ENCODE measurements at regions of chr3 and their contacts with region 1.

Region 1: GRCh38 chr3:128170805-128171516 is 17.7 kb downstream of the EEFSEC start:
- DNase-seq: no peak
- H3K4me3 ChIP-seq: no peak overlapping the region
- H3K27ac ChIP-seq: no peak overlapping the region
- H3K4me1 ChIP-seq: peaks cover 20% of the 10 kb centered on the region
- H3K27me3 ChIP-seq: no peaks in the 10 kb centered on the region
- CTCF ChIP-seq: peak in 2 of 3 experiments; percentile 52 to 91
- POLR2A ChIP-seq: no peak

Region 2: DNA sequence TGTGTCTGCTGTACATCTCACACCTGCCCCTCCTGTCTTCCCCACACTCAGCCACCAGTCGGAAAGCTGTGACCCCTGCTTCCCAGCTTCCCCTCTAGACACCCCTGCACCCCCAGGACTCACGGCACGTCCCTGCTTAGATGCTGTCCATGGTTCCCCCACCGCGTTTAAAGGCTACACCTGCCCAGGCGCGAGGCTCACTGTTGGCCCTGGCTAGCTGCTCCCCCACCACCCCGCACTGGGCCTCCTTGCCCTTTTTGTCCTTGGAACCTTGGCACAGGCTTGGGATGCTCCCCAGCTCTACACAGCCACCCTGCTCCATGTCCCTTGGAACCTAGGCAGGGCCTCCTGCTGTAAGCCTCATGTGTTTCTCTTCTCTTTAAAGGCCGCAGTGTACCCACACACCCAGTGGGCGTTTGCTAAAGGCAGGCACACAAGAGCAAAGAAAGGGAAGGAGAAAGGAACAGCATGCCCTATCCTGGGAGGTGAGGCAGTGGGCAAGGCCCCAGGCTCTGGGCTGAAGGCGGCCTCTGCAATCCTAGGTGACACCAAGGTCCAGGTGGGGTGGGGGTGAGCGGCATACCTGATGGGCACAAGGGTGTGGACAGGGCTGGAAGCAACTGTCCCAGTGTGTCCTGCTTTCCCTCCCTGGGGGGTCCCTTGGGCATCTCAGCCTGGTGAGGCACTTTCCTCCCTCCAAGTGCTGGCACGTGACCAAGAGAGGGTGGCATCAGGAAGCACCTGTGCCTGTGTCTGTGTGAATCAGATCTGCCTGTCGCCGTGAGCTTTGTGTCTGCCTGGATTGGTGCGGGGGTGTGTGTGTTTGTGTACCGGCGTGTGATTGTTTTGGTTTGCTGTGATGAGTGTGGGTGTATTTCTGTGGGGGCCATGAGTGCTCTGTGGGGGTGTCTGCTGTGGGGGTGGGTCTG is 634.8 kb before region 1 on chr3:
- intact Hi-C with region 1: no loop called
- DNase-seq: no peak
- H3K4me3 ChIP-seq: no peak overlapping the region
- H3K27ac ChIP-seq: no peak overlapping the region
- H3K4me1 ChIP-seq: no peaks in the 10 kb centered on the region
- H3K27me3 ChIP-seq: no peaks in the 10 kb centered on the region
- CTCF ChIP-seq: no peak
- POLR2A ChIP-seq: no peak

Region 3: DNA sequence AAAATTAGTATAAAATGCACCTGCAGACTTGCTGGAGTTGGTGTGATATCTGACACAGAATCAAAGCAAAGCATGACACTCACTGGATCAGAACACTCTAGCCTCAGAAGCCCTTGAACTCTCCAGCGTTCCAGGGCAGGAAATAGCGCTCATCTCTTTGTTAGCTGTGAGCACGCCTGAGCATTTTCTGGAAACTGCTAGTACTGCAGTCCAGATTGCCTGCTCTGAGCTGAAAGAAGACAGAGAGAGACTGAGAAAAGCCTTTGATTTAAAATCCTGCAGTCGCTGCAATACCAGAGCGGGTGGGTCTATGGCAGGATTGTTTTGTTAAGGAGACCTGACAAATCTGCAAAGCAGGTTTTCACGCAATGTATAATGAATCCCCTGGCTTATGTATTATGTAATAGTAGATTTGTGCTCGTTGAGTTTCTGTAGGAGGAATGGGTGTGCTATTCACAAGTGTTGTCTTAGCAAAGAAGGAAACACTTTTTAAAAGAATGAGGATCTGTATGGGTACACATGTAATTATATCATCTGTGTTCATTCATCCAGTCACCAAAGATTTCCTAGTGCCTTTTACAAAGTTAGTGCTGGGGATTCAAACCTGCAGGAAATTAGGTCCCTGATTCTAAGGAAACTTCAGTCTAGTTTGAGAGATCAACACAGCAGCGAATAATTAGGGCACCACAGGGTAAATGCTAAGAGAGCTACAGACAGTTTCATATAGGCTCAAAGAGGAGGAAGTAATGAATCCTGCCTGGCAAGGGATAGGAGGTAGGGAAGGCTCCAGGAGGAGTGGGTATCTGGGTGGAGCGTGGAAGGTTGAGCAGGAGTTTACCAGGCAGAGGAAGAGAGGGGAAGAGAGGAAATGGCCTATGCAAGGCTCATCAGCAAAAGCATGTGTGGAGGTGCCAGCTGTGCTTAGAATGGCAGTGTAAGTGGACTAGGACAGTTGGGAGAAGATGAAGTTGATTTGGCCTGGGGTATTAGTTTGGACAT is 322.5 kb before region 1 on chr3:
- intact Hi-C with region 1: no loop called
- DNase-seq: no peak
- H3K4me3 ChIP-seq: no peak overlapping the region
- H3K27ac ChIP-seq: no peak overlapping the region
- H3K4me1 ChIP-seq: no peaks in the 10 kb centered on the region
- H3K27me3 ChIP-seq: no peaks in the 10 kb centered on the region
- CTCF ChIP-seq: no peak
- POLR2A ChIP-seq: no peak

Region 4: GRCh38 chr3:128603811-128604775 is 433.1 kb after region 1 on chr3:
- intact Hi-C with region 1: loop called (anchors 10 kb)
- DNase-seq: no peak
- H3K4me3 ChIP-seq: no peak overlapping the region
- H3K27ac ChIP-seq: no peak overlapping the region
- H3K4me1 ChIP-seq: peaks cover 14% of the 10 kb centered on the region
- H3K27me3 ChIP-seq: no peaks in the 10 kb centered on the region
- CTCF ChIP-seq: no peak
- POLR2A ChIP-seq: no peak

Measured in vagina (tissue), 2 donors.